Natural killer cell (primary cell): ENCODE measurements at regions of chr19 and their contacts with region 1.

Region 1: GRCh38 chr19:40690693-40691420 is 406 bp upstream of the NUMBL start:
- DNase-seq: peak; percentile 74 to 92
- ATAC-seq: peak; percentile 56 to 82 (median 65)
- H3K4me3 ChIP-seq: peak overlapping the region; percentile 34
- H3K4me3 Mint-ChIP-seq: peak overlapping the region; percentile 90
- H3K27ac ChIP-seq: peak overlapping the region; percentile 39
- H3K27ac Mint-ChIP-seq: peak overlapping the region; percentile 77 to 94
- H3K4me1 ChIP-seq: peaks cover 45% of the 10 kb centered on the region
- H3K4me1 Mint-ChIP-seq: peaks cover 0 to 12% of the 10 kb centered on the region in 2 donors
- H3K27me3 ChIP-seq: no peaks in the 10 kb centered on the region
- H3K27me3 Mint-ChIP-seq: no peaks in the 10 kb centered on the region
- CTCF ChIP-seq: no peak

Region 2: GRCh38 chr19:40533508-40533907 is 157.3 kb before region 1 on chr19:
- intact Hi-C with region 1: no loop called
- DNase-seq: no peak
- ATAC-seq: no peak
- H3K4me3 ChIP-seq: no peak overlapping the region
- H3K4me3 Mint-ChIP-seq: no peak overlapping the region
- H3K27ac ChIP-seq: no peak overlapping the region
- H3K27ac Mint-ChIP-seq: no peak overlapping the region
- H3K4me1 ChIP-seq: peaks cover 15% of the 10 kb centered on the region
- H3K4me1 Mint-ChIP-seq: peaks cover 5 to 22% of the 10 kb centered on the region in 2 donors
- H3K27me3 ChIP-seq: peaks cover 16% of the 10 kb centered on the region
- H3K27me3 Mint-ChIP-seq: peaks cover 13 to 25% of the 10 kb centered on the region in 2 donors
- CTCF ChIP-seq: no peak

Region 3: DNA sequence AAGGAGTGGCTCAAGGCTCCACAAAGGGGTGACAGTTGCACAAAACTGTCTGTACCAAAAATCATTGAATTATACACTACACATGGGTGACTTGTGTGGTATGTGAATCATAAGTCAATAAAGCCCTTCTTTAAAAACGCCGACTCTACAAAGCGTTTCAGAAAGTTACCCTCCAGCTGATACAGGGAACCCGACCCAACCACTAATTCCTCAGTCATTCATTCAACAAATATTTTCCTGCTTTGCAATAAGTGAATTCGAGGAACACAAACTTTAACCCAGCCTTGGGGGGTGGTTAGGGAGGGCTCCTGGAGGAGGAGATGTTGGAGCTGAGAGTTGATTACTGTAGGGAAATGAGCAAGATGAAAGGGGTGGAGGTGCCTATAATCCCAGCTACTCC is 57.6 kb before region 1 on chr19:
- intact Hi-C with region 1: no loop called
- DNase-seq: no peak
- ATAC-seq: no peak
- H3K4me3 ChIP-seq: no peak overlapping the region
- H3K4me3 Mint-ChIP-seq: no peak overlapping the region
- H3K27ac ChIP-seq: no peak overlapping the region
- H3K27ac Mint-ChIP-seq: no peak overlapping the region
- H3K4me1 ChIP-seq: peaks cover 4% of the 10 kb centered on the region
- H3K4me1 Mint-ChIP-seq: peaks cover 6 to 7% of the 10 kb centered on the region in 2 donors
- H3K27me3 ChIP-seq: no peaks in the 10 kb centered on the region
- H3K27me3 Mint-ChIP-seq: peaks cover 0 to 6% of the 10 kb centered on the region in 2 donors
- CTCF ChIP-seq: no peak

Region 4: GRCh38 chr19:40716655-40717324 is 25.9 kb after region 1 on chr19 and contains the starts of genes COQ8B and ITPKC:
- intact Hi-C with region 1: loop called (anchors 1 kb)
- DNase-seq: peak; percentile 99 to 100
- ATAC-seq: peak; percentile 69 to 91 (median 76)
- H3K4me3 ChIP-seq: peak within 1 kb of the TSS; percentile 83
- H3K4me3 Mint-ChIP-seq: peak within 1 kb of the TSS; percentile 93
- H3K27ac ChIP-seq: peak within 1 kb of the TSS; percentile 92
- H3K27ac Mint-ChIP-seq: peak within 1 kb of the TSS; percentile 99
- H3K4me1 ChIP-seq: peaks cover 64% of the 10 kb centered on the region
- H3K4me1 Mint-ChIP-seq: peaks cover 51 to 66% of the 10 kb centered on the region in 2 donors
- H3K27me3 ChIP-seq: no peaks in the 10 kb centered on the region
- H3K27me3 Mint-ChIP-seq: no peaks in the 10 kb centered on the region
- CTCF ChIP-seq: no peak
- total RNA-seq, gene COQ8B: 31.8 to 46.7 (median 39.6) TPM
- total RNA-seq, gene ITPKC: 8.7 to 11.1 (median 11.0) TPM

Region 5: DNA sequence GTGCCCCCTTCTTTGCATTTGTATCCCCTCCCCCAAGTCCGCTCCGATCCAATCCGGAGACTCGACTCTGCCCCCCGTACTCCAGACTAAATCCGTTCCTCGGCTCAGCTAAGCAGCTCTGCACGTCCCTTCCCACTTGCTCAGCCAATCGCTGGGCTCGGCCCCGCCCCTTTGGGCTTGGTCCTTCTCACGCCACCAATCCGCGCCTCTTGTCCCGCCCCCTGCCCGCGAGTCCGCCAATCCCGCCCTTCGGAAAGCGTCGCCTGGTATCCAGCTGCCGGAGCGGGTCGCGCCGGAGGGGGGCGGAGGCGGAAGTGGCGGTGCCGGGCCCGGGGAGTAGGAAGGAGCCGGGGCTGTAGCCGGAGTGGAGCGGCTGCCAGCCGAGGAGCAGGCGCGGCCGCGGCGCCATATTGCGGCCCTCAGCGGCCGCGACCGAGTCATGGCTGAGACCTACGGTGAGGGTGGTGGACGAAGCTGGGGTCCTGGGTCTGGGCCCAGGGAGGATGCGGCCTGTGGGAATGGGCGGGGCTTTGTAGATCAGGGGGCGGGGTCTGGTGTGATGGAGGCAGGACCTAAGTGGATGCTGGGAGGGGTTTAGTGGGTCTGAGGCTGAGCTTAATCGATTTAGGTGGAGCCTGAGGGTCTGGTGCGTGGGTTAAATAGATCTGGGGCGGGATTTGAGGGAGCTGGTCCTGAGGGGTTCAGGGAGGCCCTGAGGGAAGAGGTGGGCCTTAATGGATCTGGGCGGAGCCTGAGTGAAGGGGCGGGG is 87.3 kb after region 1 on chr19 and contains the start of gene RAB4B:
- intact Hi-C with region 1: loop called (anchors 5 kb)
- DNase-seq: peak; percentile 100
- ATAC-seq: peak; percentile 80 to 93 (median 82)
- H3K4me3 ChIP-seq: peak within 1 kb of the TSS; percentile 92
- H3K4me3 Mint-ChIP-seq: peak within 1 kb of the TSS; percentile 97
- H3K27ac ChIP-seq: peak within 1 kb of the TSS; percentile 99
- H3K27ac Mint-ChIP-seq: peak within 1 kb of the TSS; percentile 95 to 96
- H3K4me1 ChIP-seq: peaks cover 26% of the 10 kb centered on the region
- H3K4me1 Mint-ChIP-seq: peaks cover 37 to 51% of the 10 kb centered on the region in 2 donors
- H3K27me3 ChIP-seq: no peaks in the 10 kb centered on the region
- H3K27me3 Mint-ChIP-seq: no peaks in the 10 kb centered on the region
- CTCF ChIP-seq: no peak
- total RNA-seq, gene RAB4B: 97.8 to 99.8 (median 98.6) TPM

Region 6: DNA sequence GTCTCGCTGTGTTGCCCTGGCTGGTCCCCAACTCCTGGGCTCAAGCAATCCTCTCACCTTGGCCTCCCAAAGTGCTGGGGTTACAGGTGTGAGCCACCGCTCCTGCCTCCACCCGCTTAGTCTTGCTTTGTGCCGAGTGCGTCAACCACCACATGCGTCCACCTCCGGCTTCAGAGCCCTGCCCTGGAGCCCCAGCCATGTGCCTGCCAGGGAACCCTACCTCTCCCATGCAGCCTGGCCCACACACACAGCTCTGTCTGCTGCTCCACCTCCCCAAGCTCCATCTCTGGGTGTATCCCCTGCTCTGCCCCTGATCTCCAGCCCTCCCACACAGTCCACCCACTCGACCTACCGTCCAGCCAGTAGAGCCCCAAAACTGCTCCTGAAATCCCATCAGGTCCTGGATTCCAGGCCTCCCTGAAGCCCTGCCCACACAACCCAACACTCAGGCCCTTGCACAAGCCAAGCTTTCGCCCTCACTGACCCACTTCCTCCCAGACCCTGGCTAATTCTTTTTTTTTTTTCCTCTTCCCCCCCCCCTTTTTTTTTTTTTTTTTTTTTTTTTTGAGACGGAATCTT is 432.9 kb after region 1 on chr19:
- intact Hi-C with region 1: loop called (anchors 2 kb)
- DNase-seq: no peak
- ATAC-seq: no peak
- H3K4me3 ChIP-seq: no peak overlapping the region
- H3K4me3 Mint-ChIP-seq: peak overlapping the region; percentile 28
- H3K27ac ChIP-seq: no peak overlapping the region
- H3K27ac Mint-ChIP-seq: peak overlapping the region; percentile 67 to 96
- H3K4me1 ChIP-seq: peaks cover 53% of the 10 kb centered on the region
- H3K4me1 Mint-ChIP-seq: peaks cover 45 to 70% of the 10 kb centered on the region in 2 donors
- H3K27me3 ChIP-seq: no peaks in the 10 kb centered on the region
- H3K27me3 Mint-ChIP-seq: peaks cover 0 to 4% of the 10 kb centered on the region in 2 donors
- CTCF ChIP-seq: no peak